ENCODE measurements at regions of chr2 and their contacts with region 1.

Region 1: GRCh38 chr2:47323009-47323821 is 79.7 kb upstream of the MSH2 start:
- DNase-seq: peak; percentile 85
- ATAC-seq: peak; percentile 93
- H3K4me3 Mint-ChIP-seq: no peak overlapping the region
- H3K27ac Mint-ChIP-seq: no peak overlapping the region
- H3K4me1 Mint-ChIP-seq: peaks cover 17% of the 10 kb centered on the region
- H3K27me3 Mint-ChIP-seq: no peaks in the 10 kb centered on the region
- CTCF ChIP-seq: peak; percentile 96

Region 2: DNA sequence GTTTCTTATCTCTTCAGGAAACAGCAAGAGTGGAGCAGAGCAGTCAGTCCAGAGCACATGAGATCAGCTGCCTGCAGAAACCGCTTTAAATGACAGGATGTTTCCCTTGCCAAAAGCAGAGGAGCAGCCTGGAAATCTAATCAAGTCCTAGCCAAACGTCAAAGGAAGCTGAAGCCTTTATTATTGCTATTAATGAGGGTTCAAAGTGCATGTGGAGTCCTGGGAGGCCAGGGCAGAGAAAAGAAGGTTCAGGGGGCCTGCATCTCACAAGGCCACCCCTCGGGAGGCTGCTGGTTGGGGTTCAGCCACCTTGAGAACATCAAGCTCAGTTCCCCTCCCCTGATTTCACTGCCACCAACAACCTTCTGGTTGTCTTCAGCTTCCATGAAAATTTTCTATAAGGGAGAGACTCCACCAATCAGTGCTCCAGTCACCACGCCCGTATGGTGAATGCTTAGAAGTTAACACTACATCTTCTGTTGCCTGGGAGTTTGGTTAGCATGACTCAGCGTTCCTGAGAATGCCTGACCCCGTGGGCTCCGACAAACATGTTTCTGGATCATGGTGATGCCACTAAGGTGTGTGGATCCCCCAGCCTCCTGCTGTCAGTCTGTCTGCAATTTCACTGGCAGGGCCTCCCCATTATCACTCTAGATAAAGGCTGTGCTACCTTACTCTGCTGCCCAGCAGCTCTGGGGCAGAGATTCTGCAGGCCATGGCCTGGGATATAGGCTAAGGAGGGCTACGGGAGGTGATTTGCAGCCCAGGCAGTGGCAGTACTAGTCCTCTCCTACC is 234.3 kb before region 1 on chr2:
- CTCF ChIA-PET with region 1: interaction called, 11 read pairs
- POLR2A ChIA-PET with region 1: no interaction called
- DNase-seq: no peak
- ATAC-seq: no peak; the same call in 1 of the 2 replicates
- H3K4me3 Mint-ChIP-seq: no peak overlapping the region
- H3K27ac Mint-ChIP-seq: no peak overlapping the region
- H3K4me1 Mint-ChIP-seq: 0 out of 2 replicates have a peak, but pooled peaks cover 2% of the 10 kb centered on the region
- H3K27me3 Mint-ChIP-seq: peaks cover 16% of the 10 kb centered on the region
- CTCF ChIP-seq: no peak

Region 3: GRCh38 chr2:47127862-47128543 is 195.2 kb before region 1 on chr2:
- CTCF ChIA-PET with region 1: interaction called, 43 read pairs
- POLR2A ChIA-PET with region 1: no interaction called
- DNase-seq: no peak
- ATAC-seq: peak; percentile 42
- H3K4me3 Mint-ChIP-seq: no peak overlapping the region
- H3K27ac Mint-ChIP-seq: no peak overlapping the region
- H3K4me1 Mint-ChIP-seq: peaks cover 11% of the 10 kb centered on the region
- H3K27me3 Mint-ChIP-seq: peaks cover 6% of the 10 kb centered on the region; the same call in 1 of the 2 replicates
- CTCF ChIP-seq: no peak

Region 4: DNA sequence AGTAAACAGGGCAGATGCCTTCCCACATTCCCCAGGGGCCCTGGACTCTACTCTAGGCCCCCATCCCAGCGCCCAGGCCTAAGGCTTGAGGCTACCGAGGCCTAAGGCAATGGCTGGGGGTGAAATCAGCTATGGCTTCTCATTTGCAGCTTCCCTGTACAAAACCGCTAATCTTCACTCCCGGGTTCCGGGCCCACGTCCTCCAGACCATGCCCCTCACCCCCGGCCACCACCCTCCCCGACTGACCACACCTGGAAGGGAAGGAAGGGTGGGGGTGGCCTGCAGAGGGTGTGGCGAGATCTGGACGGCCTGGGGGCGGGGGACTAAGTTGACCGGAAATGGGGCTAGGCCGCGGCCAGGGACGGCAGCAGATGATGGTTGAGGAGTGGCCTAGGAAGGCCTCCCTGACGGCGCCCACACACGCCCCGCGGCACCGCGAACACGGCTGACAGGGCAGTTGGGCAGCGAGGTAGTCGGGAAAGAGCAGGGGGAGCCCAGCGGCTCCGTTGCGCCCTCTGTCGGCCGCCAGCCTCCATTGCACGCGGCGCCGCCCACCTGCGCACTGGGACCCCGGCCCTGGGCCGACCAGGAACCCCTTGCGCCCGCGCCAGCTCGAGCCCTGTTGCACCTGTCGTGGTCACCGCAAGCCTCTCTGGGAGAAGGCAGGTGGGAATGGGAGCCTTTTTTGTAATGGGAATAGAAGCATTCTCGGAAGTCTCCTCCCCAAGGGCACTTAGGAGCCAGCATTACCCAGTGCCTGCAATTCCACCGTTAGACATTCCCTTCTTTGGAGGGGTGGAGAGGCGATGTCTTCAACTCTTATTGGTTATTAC is 51.0 kb before region 1 on chr2:
- CTCF ChIA-PET with region 1: interaction called, 16 read pairs
- POLR2A ChIA-PET with region 1: no interaction called
- DNase-seq: peak; percentile 85
- ATAC-seq: peak; percentile 91
- H3K4me3 Mint-ChIP-seq: peak overlapping the region; percentile 68
- H3K27ac Mint-ChIP-seq: no peak overlapping the region
- H3K4me1 Mint-ChIP-seq: peaks cover 51% of the 10 kb centered on the region
- H3K27me3 Mint-ChIP-seq: no peaks in the 10 kb centered on the region
- CTCF ChIP-seq: peak; percentile 99

Region 5: GRCh38 chr2:47300609-47301276 is 22.5 kb before region 1 on chr2:
- CTCF ChIA-PET with region 1: interaction called, 13 read pairs
- POLR2A ChIA-PET with region 1: no interaction called
- DNase-seq: no peak
- ATAC-seq: no peak
- H3K4me3 Mint-ChIP-seq: no peak overlapping the region
- H3K27ac Mint-ChIP-seq: no peak overlapping the region
- H3K4me1 Mint-ChIP-seq: peaks cover 21% of the 10 kb centered on the region
- H3K27me3 Mint-ChIP-seq: peaks cover 12% of the 10 kb centered on the region
- CTCF ChIP-seq: no peak

Measured in WTC11 (cell line).